Body of pancreas (tissue), 4 donors: ENCODE measurements at regions of chr6 and their contacts with region 1.

Region 1: GRCh38 chr6:49852975-49853374 is 13.4 kb downstream of the CRISP1 start:
- DNase-seq: no peak
- ATAC-seq: no peak
- H3K4me3 ChIP-seq: no peak overlapping the region
- H3K27ac ChIP-seq: no peak overlapping the region
- H3K4me1 ChIP-seq: no peaks in the 10 kb centered on the region
- H3K27me3 ChIP-seq: no peaks in the 10 kb centered on the region
- CTCF ChIP-seq: no peak
- POLR2A ChIP-seq: no peak

Region 2: DNA sequence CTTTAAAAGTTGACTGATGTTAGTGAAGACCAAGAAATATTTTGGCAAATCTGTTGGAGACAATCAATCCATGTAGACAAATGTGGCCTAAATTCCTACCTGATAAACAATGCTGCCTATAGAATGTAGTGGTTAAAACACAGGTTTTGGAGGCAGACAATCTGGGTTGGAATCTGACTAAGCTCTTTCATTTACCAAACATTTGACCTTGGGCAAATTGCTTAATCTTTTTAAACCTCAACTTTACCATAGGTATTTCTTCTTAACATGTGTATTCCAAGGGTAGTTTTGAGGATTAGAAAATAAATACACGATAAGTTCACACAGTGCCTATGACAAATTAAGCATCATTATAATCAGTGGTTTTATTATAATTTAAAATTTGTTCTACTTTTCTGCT is 227.8 kb before region 1 on chr6:
- intact Hi-C with region 1: loop called (anchors 5 kb)
- DNase-seq: no peak
- ATAC-seq: no peak
- H3K4me3 ChIP-seq: no peak overlapping the region
- H3K27ac ChIP-seq: no peak overlapping the region
- H3K4me1 ChIP-seq: no peaks in the 10 kb centered on the region
- H3K27me3 ChIP-seq: no peaks in the 10 kb centered on the region
- CTCF ChIP-seq: no peak
- POLR2A ChIP-seq: no peak